Common myeloid progenitor, CD34-positive (primary cell): ENCODE measurements at regions of chr15 and their contacts with region 1.

Region 1: GRCh38 chr15:58906225-58906624 is 27.3 kb downstream of the SLTM start:
- DNase-seq: no peak
- H3K4me3 ChIP-seq: no peak overlapping the region
- H3K27ac ChIP-seq: no peak overlapping the region
- H3K4me1 ChIP-seq: no peaks in the 10 kb centered on the region
- H3K27me3 ChIP-seq: no peaks in the 10 kb centered on the region

Region 2: DNA sequence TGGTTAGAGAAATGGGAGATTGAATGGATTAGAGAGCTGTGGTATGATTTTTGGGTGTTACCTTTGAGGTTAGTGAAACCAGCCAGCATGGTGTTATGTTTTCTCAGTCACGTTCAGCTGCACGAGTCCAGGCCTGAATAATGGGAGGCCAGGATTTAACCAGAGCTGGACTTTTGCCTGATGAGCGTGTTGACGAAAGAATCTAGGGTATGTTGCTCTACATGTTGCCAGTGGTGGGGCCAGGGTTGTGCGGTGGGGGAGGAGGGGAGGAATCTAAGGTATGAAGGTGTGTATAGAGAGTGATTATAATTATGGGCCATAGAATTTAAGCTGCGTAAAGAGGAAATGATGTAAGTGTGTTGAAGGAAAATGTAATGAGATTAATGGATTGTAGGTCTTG is 112.4 kb before region 1 on chr15:
- CTCF ChIA-PET with region 1: no interaction called
- POLR2A ChIA-PET with region 1: no interaction called
- DNase-seq: no peak
- H3K4me3 ChIP-seq: no peak overlapping the region
- H3K27ac ChIP-seq: no peak overlapping the region
- H3K4me1 ChIP-seq: no peaks in the 10 kb centered on the region
- H3K27me3 ChIP-seq: no peaks in the 10 kb centered on the region

Region 3: GRCh38 chr15:58873267-58873666 is 33.0 kb before region 1 on chr15:
- CTCF ChIA-PET with region 1: interaction called, 3 read pairs
- POLR2A ChIA-PET with region 1: interaction called, 10 read pairs
- DNase-seq: no peak
- H3K4me3 ChIP-seq: no peak overlapping the region
- H3K27ac ChIP-seq: no peak overlapping the region
- H3K4me1 ChIP-seq: peaks cover 0 to 4% (median 0%) of the 10 kb centered on the region in 4 experiments
- H3K27me3 ChIP-seq: no peaks in the 10 kb centered on the region